PC-9 (cell line): ENCODE measurements at regions of chr16 and their contacts with region 1.

Region 1: DNA sequence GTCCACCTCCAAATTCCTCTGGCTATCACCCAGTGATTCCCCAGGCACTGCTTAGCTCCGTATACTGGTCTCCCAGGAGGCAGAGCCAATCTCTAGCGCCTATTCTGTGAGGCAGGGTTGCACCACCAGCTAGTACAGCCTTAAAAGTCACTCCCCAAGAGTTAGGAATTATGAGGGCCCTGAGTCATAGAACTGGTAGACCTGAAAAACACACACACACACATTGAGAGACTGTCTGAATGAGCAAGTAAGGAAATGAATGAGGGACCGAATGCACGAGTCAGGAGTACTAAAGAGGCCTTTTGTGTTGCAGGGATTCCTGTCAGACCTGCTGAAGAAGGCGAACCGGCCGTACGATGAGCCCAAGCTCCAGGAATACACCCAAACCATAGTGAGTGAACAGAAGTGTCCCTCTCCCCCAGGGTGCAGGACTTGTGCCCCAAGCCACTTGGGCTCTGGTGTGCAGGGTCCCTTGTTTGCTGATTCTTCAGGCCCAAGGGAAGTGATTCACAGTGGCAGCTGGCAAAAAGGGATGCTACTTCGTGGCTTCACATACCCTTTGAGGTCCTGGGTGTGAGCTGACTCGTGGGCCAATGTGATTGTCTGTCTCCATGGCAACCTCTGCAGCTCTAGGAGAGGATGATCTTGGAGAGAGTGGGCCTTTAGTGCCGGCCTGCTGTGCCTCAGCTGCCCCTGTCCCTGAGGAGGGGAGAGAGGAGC is 24.7 kb downstream of the CALB2 start:
- DNase-seq: peak; percentile 25 to 78
- H3K4me3 ChIP-seq: no peak overlapping the region
- H3K27ac ChIP-seq: no peak overlapping the region
- H3K4me1 ChIP-seq: no peaks in the 10 kb centered on the region
- H3K27me3 ChIP-seq: no peaks in the 10 kb centered on the region
- CTCF ChIP-seq: no peak

Region 2: DNA sequence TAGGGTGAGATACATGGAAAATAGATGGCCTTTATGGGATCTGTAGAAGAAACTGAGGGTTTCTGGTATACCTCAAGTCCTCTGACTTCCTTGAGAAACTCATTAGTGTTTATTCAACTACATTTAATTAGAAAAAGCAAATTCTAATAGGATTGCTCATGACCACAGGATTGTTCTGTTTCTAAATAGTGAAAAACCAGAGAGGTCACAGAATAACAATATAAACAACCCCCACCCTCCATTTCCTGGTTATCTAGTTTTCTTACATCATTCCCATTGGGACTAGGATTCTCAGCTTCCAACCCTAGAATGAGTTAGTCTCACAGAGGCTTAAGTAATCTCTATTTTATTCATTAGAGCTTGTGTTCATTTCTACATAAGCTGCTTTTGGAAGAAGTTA is 829.6 kb before region 1 on chr16:
- CTCF ChIA-PET with region 1: no interaction called
- POLR2A ChIA-PET with region 1: no interaction called
- intact Hi-C with region 1: no loop called
- DNase-seq: peak in 1 of 2 experiments; percentile 88
- H3K4me3 ChIP-seq: no peak overlapping the region
- H3K27ac ChIP-seq: peak overlapping the region; percentile 93
- H3K4me1 ChIP-seq: peaks cover 57% of the 10 kb centered on the region
- H3K27me3 ChIP-seq: no peaks in the 10 kb centered on the region
- CTCF ChIP-seq: no peak

Region 3: DNA sequence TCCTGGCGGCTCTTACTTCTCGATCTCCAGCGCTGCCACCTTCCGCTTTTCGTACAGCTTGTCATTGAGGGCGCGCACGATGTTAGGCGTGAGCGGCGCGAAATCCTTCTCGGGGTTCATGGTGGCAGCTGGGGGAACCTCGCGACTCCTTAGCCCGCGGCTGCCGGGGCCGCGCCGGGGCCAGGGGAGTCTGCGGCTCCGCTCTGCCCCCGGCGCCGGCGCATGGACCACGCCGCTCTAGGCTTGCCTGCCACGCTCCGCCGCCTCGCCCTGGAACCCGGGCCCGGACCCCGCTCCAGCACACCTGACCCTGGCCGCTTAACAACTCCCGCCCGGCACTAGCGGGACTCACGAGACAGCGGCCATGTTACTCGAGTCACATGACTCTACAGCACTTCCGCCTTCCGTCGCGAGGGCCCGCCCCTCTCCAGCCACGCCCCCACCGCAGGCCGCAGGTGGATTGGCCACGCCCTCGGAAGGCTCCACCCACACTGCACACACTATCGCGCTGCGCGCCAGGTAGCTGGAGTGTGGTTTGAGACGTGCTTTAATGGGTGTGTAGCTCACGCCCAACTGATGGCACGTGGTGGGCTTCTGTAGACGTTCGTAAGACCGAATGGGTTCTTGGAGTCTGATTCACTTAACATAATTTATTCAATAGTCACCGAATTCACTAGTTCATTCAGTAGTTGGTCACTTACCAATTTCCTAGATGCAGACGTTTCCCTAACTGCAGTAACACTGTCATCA is 582.3 kb before region 1 on chr16 and contains the start of gene VAC14:
- CTCF ChIA-PET with region 1: no interaction called
- POLR2A ChIA-PET with region 1: interaction called, 18 read pairs
- intact Hi-C with region 1: no loop called
- DNase-seq: peak; percentile 84 to 97
- H3K4me3 ChIP-seq: peak within 1 kb of the TSS; percentile 71
- H3K27ac ChIP-seq: peak within 1 kb of the TSS; percentile 16; the same call in 1 of the 2 replicates
- H3K4me1 ChIP-seq: peaks cover 5% of the 10 kb centered on the region; the same call in 1 of the 2 replicates
- H3K27me3 ChIP-seq: no peaks in the 10 kb centered on the region
- CTCF ChIP-seq: no peak
- total RNA-seq, gene VAC14: 44.5 and 46.8 TPM in 2 replicates

Region 4: GRCh38 chr16:71628810-71629209 is 245.6 kb after region 1 on chr16:
- CTCF ChIA-PET with region 1: no interaction called
- POLR2A ChIA-PET with region 1: no interaction called
- intact Hi-C with region 1: no loop called
- DNase-seq: peak in 1 of 2 experiments; percentile 54
- H3K4me3 ChIP-seq: no peak overlapping the region
- H3K27ac ChIP-seq: no peak overlapping the region
- H3K4me1 ChIP-seq: peaks cover 35% of the 10 kb centered on the region
- H3K27me3 ChIP-seq: no peaks in the 10 kb centered on the region
- CTCF ChIP-seq: no peak